ENCODE measurements at regions of chr17 and their contacts with region 1.

Region 1: DNA sequence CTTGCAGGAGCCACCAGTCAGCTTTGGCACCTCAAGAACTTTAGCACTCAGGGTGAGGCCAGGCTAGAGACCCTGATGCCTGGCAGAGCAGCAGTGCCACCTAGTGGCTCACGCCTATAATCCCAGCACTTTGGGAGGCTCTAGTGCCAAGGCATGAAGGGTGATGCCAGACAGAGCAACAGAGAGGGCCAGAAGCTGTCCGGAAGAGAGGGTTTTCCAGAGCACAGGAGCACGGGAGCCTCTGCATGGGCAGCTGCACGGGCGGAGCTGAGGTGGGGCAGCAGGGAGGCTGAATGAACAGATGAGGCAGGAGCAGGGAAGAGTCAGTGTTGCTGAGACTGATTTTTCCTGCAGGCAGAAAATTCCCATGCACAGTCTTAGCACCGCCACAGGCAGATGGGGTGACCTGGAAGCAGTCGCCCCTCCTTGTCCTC is 38.9 kb downstream of the MYH3 start:
- DNase-seq: peak; percentile 43 to 96 (median 71)

Region 2: GRCh38 chr17:9729034-9729650 is 889.1 kb before region 1 on chr17:
- intact Hi-C with region 1: loop called (anchors 2 kb)
- DNase-seq: no peak

Region 3: GRCh38 chr17:10327640-10328039 is 290.6 kb before region 1 on chr17:
- intact Hi-C with region 1: loop called (anchors 1 kb)
- DNase-seq: peak; percentile 51 to 94 (median 80)

Region 4: GRCh38 chr17:10513299-10514067 is 104.7 kb before region 1 on chr17:
- intact Hi-C with region 1: no loop called
- DNase-seq: no peak

Region 5: DNA sequence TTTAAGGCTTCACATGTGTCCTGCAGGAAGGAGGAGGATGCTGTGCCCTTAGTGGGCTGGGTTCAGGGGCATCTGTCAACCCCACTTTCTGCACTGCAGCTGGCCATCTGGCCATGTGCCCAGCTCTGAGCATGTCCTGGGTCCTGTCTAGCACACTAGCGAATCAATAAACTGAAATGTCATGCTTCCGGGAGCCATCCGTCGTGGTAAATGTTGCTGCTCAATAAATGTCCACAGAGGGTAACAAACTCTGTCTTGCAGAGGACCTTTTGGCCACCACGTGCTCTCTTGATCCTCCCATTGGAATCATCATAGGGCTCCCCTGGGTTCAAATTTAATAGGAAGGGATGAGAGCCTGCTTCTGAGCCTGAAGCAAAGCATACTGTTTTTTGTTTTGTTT is 388.3 kb after region 1 on chr17:
- intact Hi-C with region 1: no loop called
- DNase-seq: no peak

Measured in posterior cingulate gyrus (tissue), 11 donors.